Left ventricle myocardium inferior (tissue), 1 donor: ENCODE measurements at regions of chr5 and their contacts with region 1.

Region 1: DNA sequence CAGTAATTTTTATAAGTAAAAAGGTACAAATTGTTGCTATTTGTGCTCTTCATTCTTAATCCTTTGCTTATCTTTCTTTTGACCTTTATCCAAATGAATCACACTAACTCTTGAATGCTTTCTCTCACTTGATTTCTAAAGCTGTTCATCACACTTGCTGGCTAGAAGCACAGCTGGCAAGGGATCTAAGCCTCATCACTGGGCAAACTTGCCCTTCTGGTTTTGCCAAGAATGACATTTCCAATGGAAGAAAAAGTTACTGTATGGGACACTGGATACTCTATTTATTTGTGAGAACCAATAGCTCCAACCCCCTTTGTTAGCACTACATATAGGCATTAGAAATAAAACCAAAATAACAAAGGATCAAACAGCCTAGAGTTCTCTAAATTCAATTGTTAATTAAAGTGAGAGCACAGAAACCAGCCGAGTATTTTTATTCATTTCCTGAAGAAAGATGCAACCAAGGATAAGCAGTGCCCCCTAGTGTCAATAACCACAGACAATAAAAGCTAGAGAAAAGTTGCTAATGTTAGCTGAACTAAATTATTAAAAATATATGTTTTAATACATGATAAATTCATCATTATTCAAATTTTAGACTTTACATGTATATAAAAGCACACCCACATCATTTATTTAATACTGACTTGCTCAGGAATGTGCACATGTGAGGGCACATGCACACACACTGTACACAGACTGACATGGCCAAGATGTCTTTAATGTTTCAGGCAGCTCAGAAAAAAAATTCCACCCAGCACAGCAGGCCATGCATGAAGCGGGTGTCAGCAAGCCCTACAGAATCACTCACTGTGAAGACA is 59.8 kb upstream of the POU5F2 start:
- DNase-seq: no peak
- H3K4me3 ChIP-seq: no peak overlapping the region
- H3K27ac ChIP-seq: no peak overlapping the region
- H3K4me1 ChIP-seq: peaks cover 7% of the 10 kb centered on the region
- H3K27me3 ChIP-seq: no peaks in the 10 kb centered on the region
- CTCF ChIP-seq: peak; percentile 77

Region 2: GRCh38 chr5:93607367-93608258 is 193.6 kb before region 1 on chr5:
- intact Hi-C with region 1: loop called (anchors 10 kb)
- DNase-seq: no peak
- H3K4me3 ChIP-seq: peak overlapping the region; percentile 9
- H3K27ac ChIP-seq: no peak overlapping the region
- H3K4me1 ChIP-seq: peaks cover 26% of the 10 kb centered on the region
- H3K27me3 ChIP-seq: peaks cover 100% of the 10 kb centered on the region
- CTCF ChIP-seq: peak; percentile 59